ENCODE measurements at regions of chr4 and their contacts with region 1.

Region 1: GRCh38 chr4:78775303-78776030 is 683 bp upstream of the BMP2K start:
- DNase-seq: no peak
- ATAC-seq: peak; percentile 60
- H3K4me3 Mint-ChIP-seq: peak overlapping the region; percentile 97
- H3K27ac Mint-ChIP-seq: peak overlapping the region; percentile 99
- H3K4me1 Mint-ChIP-seq: peaks cover 19% of the 10 kb centered on the region
- H3K27me3 Mint-ChIP-seq: no peaks in the 10 kb centered on the region
- CTCF ChIP-seq: no peak

Region 2: DNA sequence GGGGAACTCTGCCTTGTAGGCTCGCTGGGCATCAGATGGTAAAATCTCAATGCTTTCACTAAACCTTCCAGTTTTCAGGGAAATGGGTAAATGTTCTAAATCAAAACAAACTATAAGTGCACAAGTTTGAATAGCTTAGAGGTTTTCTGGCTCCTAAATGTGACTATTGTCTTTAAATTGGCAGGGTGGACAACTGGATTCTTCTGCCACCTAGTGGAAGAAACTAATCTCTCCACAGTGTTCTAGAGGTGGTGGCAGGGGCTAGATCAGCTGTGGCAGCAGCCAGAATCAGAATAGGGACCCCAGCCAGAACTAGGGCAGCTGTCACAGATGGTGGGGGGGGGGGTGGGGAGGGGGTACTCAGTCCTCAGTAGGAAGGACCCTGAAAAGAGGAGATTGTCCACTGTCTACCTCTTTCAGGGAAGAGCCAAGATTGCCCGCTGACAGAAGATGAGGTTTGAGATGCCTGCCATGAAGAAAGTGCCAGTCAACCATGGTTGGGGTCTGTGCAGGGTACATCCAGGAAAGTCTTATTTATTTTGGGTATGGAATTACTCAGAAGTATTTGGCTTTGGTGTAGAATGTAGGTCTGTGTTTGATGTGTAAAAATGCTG is 1417.0 kb before region 1 on chr4:
- CTCF ChIA-PET with region 1: no interaction called
- POLR2A ChIA-PET with region 1: no interaction called
- intact Hi-C with region 1: no loop called
- DNase-seq: no peak
- ATAC-seq: no peak
- H3K4me3 Mint-ChIP-seq: no peak overlapping the region
- H3K27ac Mint-ChIP-seq: no peak overlapping the region
- H3K4me1 Mint-ChIP-seq: peaks cover 17% of the 10 kb centered on the region
- H3K27me3 Mint-ChIP-seq: peaks cover 3% of the 10 kb centered on the region
- CTCF ChIP-seq: no peak

Region 3: GRCh38 chr4:77862478-77863216 is 912.8 kb before region 1 on chr4 and contains the start of gene MRPL1:
- CTCF ChIA-PET with region 1: no interaction called
- POLR2A ChIA-PET with region 1: interaction called, 8 read pairs
- intact Hi-C with region 1: loop called (anchors 5 kb)
- DNase-seq: peak; percentile 72
- ATAC-seq: peak; percentile 86
- H3K4me3 Mint-ChIP-seq: peak within 1 kb of the TSS; percentile 97
- H3K27ac Mint-ChIP-seq: peak within 1 kb of the TSS; percentile 100
- H3K4me1 Mint-ChIP-seq: peaks cover 47% of the 10 kb centered on the region
- H3K27me3 Mint-ChIP-seq: no peaks in the 10 kb centered on the region
- CTCF ChIP-seq: no peak
- total RNA-seq, gene MRPL1: 31.7 and 38.3 TPM in 2 replicates

Region 4: DNA sequence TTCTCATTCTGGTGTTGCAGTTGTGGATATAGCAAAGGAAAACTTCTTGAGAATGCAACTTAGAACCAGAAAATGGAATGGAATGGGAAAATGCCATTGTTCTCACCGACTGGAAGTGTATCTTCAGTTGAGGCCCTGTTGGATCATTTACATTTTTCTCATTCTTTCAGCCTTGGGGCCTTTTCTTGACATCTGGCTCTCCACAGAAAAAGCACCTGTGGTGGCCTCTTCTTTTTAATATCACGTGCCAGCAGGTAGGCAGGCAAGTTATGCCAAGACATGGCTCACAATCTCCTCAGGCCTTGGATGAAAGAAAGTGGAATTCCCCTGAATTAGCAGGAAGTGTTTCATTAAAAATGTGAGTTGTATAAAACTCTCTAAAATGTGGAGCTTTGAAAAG is 596.3 kb before region 1 on chr4:
- CTCF ChIA-PET with region 1: no interaction called
- POLR2A ChIA-PET with region 1: no interaction called
- intact Hi-C with region 1: no loop called
- DNase-seq: no peak
- ATAC-seq: no peak
- H3K4me3 Mint-ChIP-seq: no peak overlapping the region
- H3K27ac Mint-ChIP-seq: no peak overlapping the region
- H3K4me1 Mint-ChIP-seq: no peaks in the 10 kb centered on the region
- H3K27me3 Mint-ChIP-seq: peaks cover 8% of the 10 kb centered on the region
- CTCF ChIP-seq: no peak

Region 5: GRCh38 chr4:78629991-78630541 is 145.4 kb before region 1 on chr4:
- CTCF ChIA-PET with region 1: no interaction called
- POLR2A ChIA-PET with region 1: interaction called, 16 read pairs
- intact Hi-C with region 1: no loop called
- DNase-seq: no peak
- ATAC-seq: peak; percentile 13
- H3K4me3 Mint-ChIP-seq: peak overlapping the region; percentile 7
- H3K27ac Mint-ChIP-seq: peak overlapping the region; percentile 94
- H3K4me1 Mint-ChIP-seq: peaks cover 88% of the 10 kb centered on the region
- H3K27me3 Mint-ChIP-seq: no peaks in the 10 kb centered on the region
- CTCF ChIP-seq: no peak

Region 6: DNA sequence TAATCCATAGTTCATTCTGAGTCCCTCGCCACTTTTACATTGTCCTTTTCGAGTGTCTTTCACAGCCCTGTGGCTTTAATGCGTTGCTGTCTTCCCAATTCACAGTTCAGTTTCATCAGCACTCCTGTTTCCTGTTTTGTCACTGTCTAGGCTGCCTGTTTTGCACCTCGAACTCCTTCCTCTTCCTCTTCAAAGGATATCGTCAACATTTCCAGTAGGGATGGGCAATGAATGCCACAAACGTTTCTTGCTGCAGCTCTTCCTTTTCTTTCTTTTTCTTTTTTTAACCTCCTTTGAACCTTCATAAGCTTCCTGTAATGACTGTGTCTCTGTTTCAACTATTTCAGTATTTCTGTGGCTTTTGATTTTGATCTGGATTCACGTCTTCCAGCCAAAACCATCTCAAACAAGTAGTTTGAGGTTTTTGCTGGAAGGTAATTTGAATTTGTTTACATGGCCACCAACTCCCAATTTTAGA is 118.5 kb before region 1 on chr4:
- CTCF ChIA-PET with region 1: interaction called, 4 read pairs
- POLR2A ChIA-PET with region 1: interaction called, 21 read pairs
- intact Hi-C with region 1: no loop called
- DNase-seq: no peak
- ATAC-seq: no peak
- H3K4me3 Mint-ChIP-seq: peak overlapping the region; percentile 72
- H3K27ac Mint-ChIP-seq: peak overlapping the region; percentile 85
- H3K4me1 Mint-ChIP-seq: peaks cover 51% of the 10 kb centered on the region
- H3K27me3 Mint-ChIP-seq: no peaks in the 10 kb centered on the region
- CTCF ChIP-seq: no peak

Region 7: GRCh38 chr4:78704981-78705683 is 70.3 kb before region 1 on chr4:
- CTCF ChIA-PET with region 1: no interaction called
- POLR2A ChIA-PET with region 1: interaction called, 12 read pairs
- intact Hi-C with region 1: no loop called
- DNase-seq: no peak
- ATAC-seq: no peak
- H3K4me3 Mint-ChIP-seq: no peak overlapping the region
- H3K27ac Mint-ChIP-seq: peak overlapping the region; percentile 46
- H3K4me1 Mint-ChIP-seq: peaks cover 42% of the 10 kb centered on the region
- H3K27me3 Mint-ChIP-seq: no peaks in the 10 kb centered on the region
- CTCF ChIP-seq: no peak

Region 8: DNA sequence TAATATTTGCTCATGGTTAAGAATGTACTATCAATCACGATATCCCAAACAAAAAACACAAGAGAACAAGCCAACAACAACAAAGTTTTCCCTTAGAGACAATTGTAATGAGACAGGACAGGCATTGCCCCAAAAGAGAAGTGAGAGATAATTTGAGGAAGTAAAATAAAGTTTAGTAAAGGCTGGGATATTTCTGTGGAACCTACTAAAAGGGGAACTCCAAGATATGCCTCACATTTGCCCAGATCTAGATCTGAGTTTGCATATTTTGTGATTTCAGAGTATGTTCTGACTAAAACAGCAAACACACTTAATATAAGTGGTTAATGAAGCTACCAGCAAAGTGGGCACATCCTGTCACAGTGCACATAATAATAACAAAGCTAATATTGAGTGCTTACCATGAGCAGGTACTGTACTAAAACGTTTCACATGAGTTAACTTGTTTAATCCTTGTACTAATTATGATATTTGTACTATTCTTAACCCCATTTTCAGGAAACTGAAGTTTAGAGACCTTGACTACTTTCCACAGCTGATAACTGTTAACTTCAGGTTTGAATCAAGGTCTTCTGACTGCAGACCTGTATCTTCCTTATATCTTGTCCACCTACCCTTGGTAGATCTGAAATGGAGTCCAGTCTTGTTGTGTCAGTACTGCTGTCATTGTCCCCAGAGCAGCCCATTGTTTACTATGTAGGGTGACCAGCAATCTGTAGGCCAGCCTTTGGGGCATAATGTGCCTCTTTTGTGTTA is 25.3 kb before region 1 on chr4:
- CTCF ChIA-PET with region 1: no interaction called
- POLR2A ChIA-PET with region 1: interaction called, 83 read pairs
- intact Hi-C with region 1: loop called (anchors 1 kb)
- DNase-seq: no peak
- ATAC-seq: peak; percentile 83
- H3K4me3 Mint-ChIP-seq: peak overlapping the region; percentile 74
- H3K27ac Mint-ChIP-seq: peak overlapping the region; percentile 93
- H3K4me1 Mint-ChIP-seq: peaks cover 72% of the 10 kb centered on the region
- H3K27me3 Mint-ChIP-seq: no peaks in the 10 kb centered on the region
- CTCF ChIP-seq: no peak

Region 9: DNA sequence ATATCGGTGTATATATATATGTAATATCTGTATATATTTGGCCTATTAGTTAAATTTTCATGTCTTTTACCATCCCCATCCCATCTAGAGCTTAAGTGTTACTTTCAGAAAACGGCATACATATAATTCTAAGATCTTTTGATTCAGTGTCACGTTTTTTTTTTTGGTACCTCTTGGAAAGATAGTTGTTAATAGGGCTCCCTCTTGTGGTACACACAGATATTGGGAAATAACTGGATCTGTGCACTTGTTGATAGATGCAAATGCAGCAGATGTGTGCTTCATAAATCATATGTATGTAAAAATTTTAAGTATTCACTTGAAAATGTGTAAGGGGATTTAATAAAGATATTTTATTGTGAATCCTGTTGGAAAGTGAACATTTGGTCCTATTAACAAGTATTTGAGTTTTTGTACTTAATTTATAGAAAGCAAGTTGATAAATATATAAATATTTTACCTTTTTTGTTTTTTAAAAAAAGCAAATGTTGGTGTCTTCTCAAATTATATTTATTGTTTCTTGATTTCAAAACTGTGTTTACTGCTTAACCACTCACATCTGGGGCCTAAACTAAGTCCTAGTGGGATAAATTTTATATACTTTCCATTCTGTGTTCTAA is 89.0 kb after region 1 on chr4:
- CTCF ChIA-PET with region 1: interaction called, 3 read pairs
- POLR2A ChIA-PET with region 1: interaction called, 10 read pairs
- intact Hi-C with region 1: loop called (anchors 2 kb)
- DNase-seq: no peak
- ATAC-seq: peak; percentile 47
- H3K4me3 Mint-ChIP-seq: peak overlapping the region; percentile 21
- H3K27ac Mint-ChIP-seq: peak overlapping the region; percentile 70
- H3K4me1 Mint-ChIP-seq: peaks cover 18% of the 10 kb centered on the region
- H3K27me3 Mint-ChIP-seq: no peaks in the 10 kb centered on the region
- CTCF ChIP-seq: peak; percentile 25

Measured in activated B cell treated with CpG ODN at 0.5 μM for 24 hours (primary cell).